ENCODE measurements at regions of chr7 and their contacts with region 1.

Region 1: GRCh38 chr7:35401217-35401879 is 147.4 kb upstream of the TBX20 start:
- DNase-seq: no peak
- ATAC-seq: no peak
- H3K4me3 ChIP-seq: no peak overlapping the region
- H3K27ac ChIP-seq: no peak overlapping the region
- H3K4me1 ChIP-seq: no peaks in the 10 kb centered on the region
- H3K27me3 ChIP-seq: no peaks in the 10 kb centered on the region
- CTCF ChIP-seq: no peak
- POLR2A ChIP-seq: no peak
- RAD21 ChIP-seq: no peak

Region 2: GRCh38 chr7:35261476-35262285 is 139.7 kb before region 1 on chr7:
- CTCF ChIA-PET with region 1: no interaction called
- POLR2A ChIA-PET with region 1: no interaction called
- dilution Hi-C with region 1: no loop called
- in situ Hi-C with region 1: no loop called
- intact Hi-C with region 1: loop called (anchors 10 kb)
- DNase-seq: no peak
- ATAC-seq: no peak
- H3K4me3 ChIP-seq: no peak overlapping the region
- H3K27ac ChIP-seq: no peak overlapping the region
- H3K4me1 ChIP-seq: no peaks in the 10 kb centered on the region
- H3K27me3 ChIP-seq: peaks cover 59% of the 10 kb centered on the region
- CTCF ChIP-seq: no peak
- POLR2A ChIP-seq: no peak
- RAD21 ChIP-seq: no peak

Measured in IMR-90 (cell line).